ENCODE measurements at regions of chr13 and their contacts with region 1.

Region 1: DNA sequence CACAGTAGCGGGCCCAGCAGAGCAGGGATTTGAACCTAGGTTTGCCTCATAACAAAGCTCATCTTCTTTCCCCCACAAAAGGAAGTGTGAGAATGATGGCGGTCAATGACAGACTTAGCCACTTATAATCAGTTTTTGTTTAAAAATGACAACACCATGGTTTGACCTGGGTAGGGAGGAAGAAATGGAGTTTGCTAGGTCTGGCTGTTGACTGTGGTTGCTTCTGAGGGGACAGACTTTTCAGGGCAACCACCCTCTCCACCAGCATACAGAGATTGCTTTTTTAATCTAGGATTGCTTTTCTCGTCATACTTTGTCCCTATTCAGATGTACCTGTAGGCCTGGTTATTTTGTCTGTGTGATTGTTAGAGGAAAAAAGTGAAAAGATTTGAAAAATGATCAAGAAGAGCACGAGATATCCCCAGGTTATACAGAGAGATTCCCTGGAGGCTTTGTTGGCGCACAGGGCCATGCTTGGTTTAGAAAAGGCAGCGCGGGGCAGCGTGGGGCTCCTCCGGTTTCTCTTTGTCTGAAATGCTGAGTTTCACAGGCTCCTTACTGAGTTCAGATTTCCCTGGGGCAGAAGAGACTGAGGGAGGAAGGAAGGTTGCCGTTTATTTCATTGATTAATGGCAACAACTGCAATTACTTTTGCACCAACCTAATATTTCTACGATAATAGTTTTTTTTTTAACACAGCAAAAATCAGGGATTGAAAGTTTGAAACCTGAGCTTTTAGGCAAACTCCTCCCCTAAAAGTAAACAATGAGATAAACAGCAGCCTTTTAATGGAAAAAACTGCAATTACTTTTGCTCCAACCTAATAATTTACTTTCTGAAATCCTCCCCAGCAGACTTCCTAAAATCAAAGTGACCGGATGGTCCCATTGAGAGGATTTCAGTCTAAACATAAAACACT is 97.0 kb upstream of the RNF113B start:
- DNase-seq: no peak
- H3K4me3 ChIP-seq: no peak overlapping the region
- H3K4me3 Mint-ChIP-seq: peak overlapping the region; percentile 44
- H3K27ac Mint-ChIP-seq: peak overlapping the region; percentile 98
- H3K4me1 ChIP-seq: peaks cover 83% of the 10 kb centered on the region
- H3K4me1 Mint-ChIP-seq: peaks cover 70% of the 10 kb centered on the region
- H3K27me3 ChIP-seq: no peaks in the 10 kb centered on the region
- H3K27me3 Mint-ChIP-seq: no peaks in the 10 kb centered on the region
- CTCF ChIP-seq: no peak

Region 2: GRCh38 chr13:98260357-98261164 is 13.5 kb before region 1 on chr13:
- CTCF ChIA-PET with region 1: interaction called, 5 read pairs
- POLR2A ChIA-PET with region 1: interaction called, 5 read pairs
- intact Hi-C with region 1: loop called (anchors 1 kb)
- DNase-seq: no peak
- H3K4me3 ChIP-seq: no peak overlapping the region
- H3K4me3 Mint-ChIP-seq: no peak overlapping the region
- H3K27ac Mint-ChIP-seq: peak overlapping the region; percentile 37
- H3K4me1 ChIP-seq: peaks cover 50% of the 10 kb centered on the region
- H3K4me1 Mint-ChIP-seq: peaks cover 54% of the 10 kb centered on the region
- H3K27me3 ChIP-seq: no peaks in the 10 kb centered on the region
- H3K27me3 Mint-ChIP-seq: no peaks in the 10 kb centered on the region
- CTCF ChIP-seq: no peak

Region 3: GRCh38 chr13:98293103-98293502 is 19.0 kb after region 1 on chr13:
- CTCF ChIA-PET with region 1: no interaction called
- POLR2A ChIA-PET with region 1: no interaction called
- intact Hi-C with region 1: loop called (anchors 1 kb)
- DNase-seq: peak; percentile 64 to 77
- H3K4me3 ChIP-seq: no peak overlapping the region
- H3K4me3 Mint-ChIP-seq: peak overlapping the region; percentile 24
- H3K27ac Mint-ChIP-seq: peak overlapping the region; percentile 87
- H3K4me1 ChIP-seq: peaks cover 44% of the 10 kb centered on the region
- H3K4me1 Mint-ChIP-seq: peaks cover 47% of the 10 kb centered on the region
- H3K27me3 ChIP-seq: no peaks in the 10 kb centered on the region
- H3K27me3 Mint-ChIP-seq: no peaks in the 10 kb centered on the region
- CTCF ChIP-seq: no peak

Region 4: DNA sequence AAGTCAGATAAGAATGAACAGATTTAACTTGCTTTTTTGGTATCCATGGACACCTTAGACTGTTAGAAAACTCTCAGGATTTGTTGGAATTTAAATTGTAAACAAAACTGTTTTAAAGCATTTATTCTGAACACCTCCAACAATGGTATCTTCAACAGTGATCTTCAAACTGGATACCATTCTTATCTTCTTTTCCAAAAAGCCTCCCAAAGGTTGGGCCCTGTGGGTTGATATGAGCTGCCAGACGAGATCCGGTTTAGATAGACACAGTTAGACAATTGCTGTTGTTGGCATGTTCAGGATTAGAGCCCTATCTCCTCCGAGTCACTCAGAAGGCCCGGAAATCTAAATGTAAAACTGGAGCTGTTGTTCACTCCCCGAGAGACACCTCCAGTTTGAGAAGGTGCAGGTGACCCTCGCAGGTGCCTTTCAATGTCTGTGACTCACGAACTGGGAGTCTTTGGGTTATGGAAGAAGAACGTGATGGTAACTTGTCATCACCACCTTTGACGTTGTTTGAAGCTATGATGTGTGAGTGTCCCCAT is 46.5 kb after region 1 on chr13:
- CTCF ChIA-PET with region 1: no interaction called
- POLR2A ChIA-PET with region 1: interaction called, 3 read pairs
- intact Hi-C with region 1: loop called (anchors 1 kb)
- DNase-seq: peak; percentile 76 to 80
- H3K4me3 ChIP-seq: no peak overlapping the region
- H3K4me3 Mint-ChIP-seq: peak overlapping the region; percentile 2
- H3K27ac Mint-ChIP-seq: peak overlapping the region; percentile 74
- H3K4me1 ChIP-seq: peaks cover 21% of the 10 kb centered on the region
- H3K4me1 Mint-ChIP-seq: peaks cover 36% of the 10 kb centered on the region
- H3K27me3 ChIP-seq: no peaks in the 10 kb centered on the region
- H3K27me3 Mint-ChIP-seq: no peaks in the 10 kb centered on the region
- CTCF ChIP-seq: no peak

Region 5: GRCh38 chr13:98327371-98328270 is 53.5 kb after region 1 on chr13:
- CTCF ChIA-PET with region 1: no interaction called
- POLR2A ChIA-PET with region 1: no interaction called
- intact Hi-C with region 1: loop called (anchors 1 kb)
- DNase-seq: peak; percentile 73 to 78
- H3K4me3 ChIP-seq: no peak overlapping the region
- H3K4me3 Mint-ChIP-seq: peak overlapping the region; percentile 43
- H3K27ac Mint-ChIP-seq: peak overlapping the region; percentile 73
- H3K4me1 ChIP-seq: peaks cover 29% of the 10 kb centered on the region
- H3K4me1 Mint-ChIP-seq: peaks cover 29% of the 10 kb centered on the region
- H3K27me3 ChIP-seq: no peaks in the 10 kb centered on the region
- H3K27me3 Mint-ChIP-seq: no peaks in the 10 kb centered on the region
- CTCF ChIP-seq: no peak

Region 6: DNA sequence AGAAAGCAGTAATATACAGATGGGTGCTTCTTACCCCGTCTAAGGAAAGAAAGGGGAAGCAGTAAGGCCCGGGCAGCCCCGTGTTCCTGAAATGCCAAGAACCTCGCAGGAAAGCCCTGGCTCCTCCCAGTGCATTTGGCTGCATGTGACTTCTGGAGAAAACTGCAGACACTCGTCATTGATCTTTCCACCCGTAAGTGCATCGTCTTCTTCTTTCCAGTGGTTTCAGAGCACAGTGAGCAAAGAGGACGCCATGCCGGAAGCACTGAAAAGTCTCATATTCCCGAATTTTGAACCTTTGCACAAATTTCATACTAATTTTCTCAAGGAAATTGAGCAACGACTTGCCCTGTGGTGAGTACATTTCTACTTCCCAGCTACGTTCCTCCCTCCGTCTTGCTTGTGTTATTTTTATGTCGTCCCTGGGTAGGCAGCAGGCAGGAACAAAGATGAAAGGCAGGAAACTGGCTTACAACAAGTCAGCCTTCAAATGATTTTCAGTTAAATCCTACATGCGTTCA is 137.7 kb after region 1 on chr13:
- CTCF ChIA-PET with region 1: no interaction called
- POLR2A ChIA-PET with region 1: no interaction called
- intact Hi-C with region 1: loop called (anchors 1 kb)
- DNase-seq: peak in 1 of 2 experiments; percentile 16
- H3K4me3 ChIP-seq: no peak overlapping the region
- H3K4me3 Mint-ChIP-seq: no peak overlapping the region
- H3K27ac Mint-ChIP-seq: no peak overlapping the region
- H3K4me1 ChIP-seq: peaks cover 19% of the 10 kb centered on the region
- H3K4me1 Mint-ChIP-seq: peaks cover 14% of the 10 kb centered on the region
- H3K27me3 ChIP-seq: no peaks in the 10 kb centered on the region
- H3K27me3 Mint-ChIP-seq: no peaks in the 10 kb centered on the region
- CTCF ChIP-seq: no peak

Region 7: GRCh38 chr13:98423417-98423816 is 149.3 kb after region 1 on chr13:
- CTCF ChIA-PET with region 1: no interaction called
- POLR2A ChIA-PET with region 1: no interaction called
- intact Hi-C with region 1: no loop called
- DNase-seq: peak in 1 of 2 experiments; percentile 3
- H3K4me3 ChIP-seq: no peak overlapping the region
- H3K4me3 Mint-ChIP-seq: no peak overlapping the region
- H3K27ac Mint-ChIP-seq: no peak overlapping the region
- H3K4me1 ChIP-seq: no peaks in the 10 kb centered on the region
- H3K4me1 Mint-ChIP-seq: peaks cover 4% of the 10 kb centered on the region
- H3K27me3 ChIP-seq: no peaks in the 10 kb centered on the region
- H3K27me3 Mint-ChIP-seq: no peaks in the 10 kb centered on the region
- CTCF ChIP-seq: no peak

Region 8: GRCh38 chr13:98466634-98467236 is 192.7 kb after region 1 on chr13:
- CTCF ChIA-PET with region 1: no interaction called
- POLR2A ChIA-PET with region 1: no interaction called
- intact Hi-C with region 1: no loop called
- DNase-seq: peak in 1 of 2 experiments; percentile 69
- H3K4me3 ChIP-seq: no peak overlapping the region
- H3K4me3 Mint-ChIP-seq: no peak overlapping the region
- H3K27ac Mint-ChIP-seq: no peak overlapping the region
- H3K4me1 ChIP-seq: no peaks in the 10 kb centered on the region
- H3K4me1 Mint-ChIP-seq: peaks cover 19% of the 10 kb centered on the region
- H3K27me3 ChIP-seq: no peaks in the 10 kb centered on the region
- H3K27me3 Mint-ChIP-seq: no peaks in the 10 kb centered on the region
- CTCF ChIP-seq: peak; percentile 58 to 67

Measured in Caco-2 (cell line).